ENCODE measurements at regions of chr19 and their contacts with region 1.

Region 1: GRCh38 chr19:46728693-46729676 is 12.1 kb upstream of the PRKD2 start:
- DNase-seq: peak; percentile 88
- ATAC-seq: peak; percentile 90
- H3K4me3 Mint-ChIP-seq: no peak overlapping the region
- H3K27ac Mint-ChIP-seq: peak overlapping the region; percentile 65
- H3K4me1 Mint-ChIP-seq: peaks cover 11% of the 10 kb centered on the region
- H3K27me3 Mint-ChIP-seq: no peaks in the 10 kb centered on the region
- CTCF ChIP-seq: peak; percentile 94

Region 2: DNA sequence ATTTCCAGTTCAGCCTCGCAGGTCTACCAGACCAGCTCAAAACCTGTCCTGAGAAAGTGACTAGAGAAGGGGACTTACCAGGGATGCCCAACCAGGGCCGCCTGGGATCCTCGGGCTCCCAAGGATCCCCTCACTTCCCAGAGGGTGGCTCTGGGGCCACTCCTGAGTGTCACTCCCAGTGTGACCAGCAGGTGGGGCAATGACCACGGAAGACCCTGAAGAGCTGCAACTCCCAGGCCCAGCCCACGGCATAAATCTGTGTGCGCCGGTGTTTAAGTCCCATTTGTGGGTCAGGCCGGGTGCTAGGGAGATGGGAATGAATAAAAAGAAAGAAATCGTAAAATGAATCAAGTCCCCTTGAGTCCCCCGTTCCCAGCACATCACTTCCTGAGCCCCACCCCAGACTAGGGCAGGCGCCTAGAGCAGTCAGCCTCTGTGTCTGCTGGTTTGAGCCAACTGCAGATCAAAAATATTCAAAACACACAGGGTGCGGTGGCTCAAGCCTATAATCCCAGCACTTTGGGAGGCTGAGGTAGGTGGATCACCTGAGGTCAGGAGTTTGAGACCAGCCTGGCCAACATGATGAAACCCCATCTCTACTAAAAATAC is 114.8 kb before region 1 on chr19:
- CTCF ChIA-PET with region 1: interaction called, 8 read pairs
- POLR2A ChIA-PET with region 1: interaction called, 3 read pairs
- intact Hi-C with region 1: loop called (anchors 10 kb)
- DNase-seq: peak; percentile 92
- ATAC-seq: peak; percentile 55
- H3K4me3 Mint-ChIP-seq: peak overlapping the region; percentile 32
- H3K27ac Mint-ChIP-seq: peak overlapping the region; percentile 89
- H3K4me1 Mint-ChIP-seq: peaks cover 72% of the 10 kb centered on the region
- H3K27me3 Mint-ChIP-seq: no peaks in the 10 kb centered on the region
- CTCF ChIP-seq: peak; percentile 96

Region 3: DNA sequence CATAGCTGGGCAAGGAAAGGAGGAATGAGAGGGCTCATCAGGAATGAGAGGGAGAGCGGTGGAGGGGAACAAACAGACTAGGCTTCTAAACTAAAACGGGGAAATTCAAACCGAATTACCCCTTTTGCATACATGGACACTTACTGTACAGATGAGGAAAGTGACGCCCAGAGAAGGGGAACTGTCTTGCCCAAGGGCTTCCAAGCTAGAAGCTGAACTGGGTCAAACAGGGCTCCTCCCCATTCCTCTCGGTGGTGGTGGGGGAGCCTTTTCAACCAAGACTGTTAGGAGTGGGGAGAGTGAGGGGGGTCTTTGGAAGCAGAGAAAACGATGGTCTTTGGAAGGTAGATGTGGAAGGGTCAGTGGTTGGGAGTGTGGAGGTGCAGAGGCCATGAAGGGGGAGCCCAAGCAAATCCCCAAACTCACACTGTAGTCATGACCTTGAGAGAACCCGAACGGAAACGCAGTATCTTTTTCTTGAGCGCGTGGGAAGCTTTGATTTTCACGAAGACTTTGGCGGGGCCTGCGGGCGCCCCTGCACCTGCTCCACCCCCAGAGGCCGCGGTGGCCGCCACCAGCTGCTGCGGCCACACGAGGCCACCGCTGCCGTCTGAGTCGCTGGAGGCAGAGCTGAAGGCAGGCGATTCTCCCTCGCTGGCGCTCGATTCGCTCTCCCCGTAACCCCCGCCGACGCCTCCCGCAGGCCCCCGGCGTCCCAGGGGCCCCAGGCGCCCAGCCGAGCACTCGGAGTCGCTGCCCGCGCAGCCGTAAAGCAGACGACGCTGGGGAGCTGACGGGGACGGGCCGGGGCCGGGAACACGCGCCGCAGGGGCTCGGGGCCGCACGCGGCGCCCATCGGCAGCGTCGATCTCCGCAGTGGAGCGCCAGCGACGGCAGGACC is 80.7 kb before region 1 on chr19:
- CTCF ChIA-PET with region 1: no interaction called
- POLR2A ChIA-PET with region 1: no interaction called
- intact Hi-C with region 1: no loop called
- DNase-seq: peak; percentile 43
- ATAC-seq: peak; percentile 65
- H3K4me3 Mint-ChIP-seq: no peak overlapping the region
- H3K27ac Mint-ChIP-seq: no peak overlapping the region
- H3K4me1 Mint-ChIP-seq: peaks cover 4% of the 10 kb centered on the region
- H3K27me3 Mint-ChIP-seq: peaks cover 37% of the 10 kb centered on the region
- CTCF ChIP-seq: no peak

Region 4: DNA sequence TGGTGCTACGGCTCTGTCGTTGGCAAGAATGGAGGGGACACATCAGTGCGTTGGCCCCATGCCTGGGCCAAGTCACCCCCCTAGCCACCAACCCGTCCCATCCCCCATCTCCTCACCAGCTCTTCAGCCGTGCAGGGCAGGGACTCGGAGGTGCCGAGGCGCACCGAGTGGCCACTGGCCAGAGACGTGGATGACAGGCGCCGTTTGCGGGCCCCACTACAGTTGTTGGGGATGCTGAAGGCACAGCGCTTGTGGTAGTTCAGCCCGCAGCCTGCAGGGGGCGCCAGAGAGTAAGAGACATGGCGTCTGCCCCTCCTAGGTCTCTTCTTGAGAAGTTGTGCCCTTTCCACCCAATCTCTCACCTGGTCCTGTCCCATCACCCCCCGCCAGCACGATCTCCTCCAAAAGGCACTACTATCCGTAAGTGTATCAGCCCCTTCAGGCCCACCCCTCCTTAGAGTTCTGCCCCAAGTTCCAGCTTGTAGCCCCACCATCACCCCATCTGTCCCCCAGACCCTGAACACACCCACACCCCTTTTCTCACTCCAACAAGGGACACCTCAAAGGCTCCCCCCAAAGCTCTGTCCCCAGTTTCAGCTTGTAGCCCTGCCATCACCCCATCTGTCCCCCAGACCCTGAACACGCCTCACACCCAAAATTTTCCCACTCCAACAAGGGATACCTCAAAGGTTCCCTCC is 24.5 kb before region 1 on chr19:
- CTCF ChIA-PET with region 1: interaction called, 95 read pairs
- POLR2A ChIA-PET with region 1: interaction called, 6 read pairs
- intact Hi-C with region 1: loop called (anchors 1 kb)
- DNase-seq: peak; percentile 94
- ATAC-seq: peak; percentile 98
- H3K4me3 Mint-ChIP-seq: no peak overlapping the region
- H3K27ac Mint-ChIP-seq: peak overlapping the region; percentile 57
- H3K4me1 Mint-ChIP-seq: peaks cover 7% of the 10 kb centered on the region
- H3K27me3 Mint-ChIP-seq: no peaks in the 10 kb centered on the region
- CTCF ChIP-seq: peak; percentile 95

Region 5: DNA sequence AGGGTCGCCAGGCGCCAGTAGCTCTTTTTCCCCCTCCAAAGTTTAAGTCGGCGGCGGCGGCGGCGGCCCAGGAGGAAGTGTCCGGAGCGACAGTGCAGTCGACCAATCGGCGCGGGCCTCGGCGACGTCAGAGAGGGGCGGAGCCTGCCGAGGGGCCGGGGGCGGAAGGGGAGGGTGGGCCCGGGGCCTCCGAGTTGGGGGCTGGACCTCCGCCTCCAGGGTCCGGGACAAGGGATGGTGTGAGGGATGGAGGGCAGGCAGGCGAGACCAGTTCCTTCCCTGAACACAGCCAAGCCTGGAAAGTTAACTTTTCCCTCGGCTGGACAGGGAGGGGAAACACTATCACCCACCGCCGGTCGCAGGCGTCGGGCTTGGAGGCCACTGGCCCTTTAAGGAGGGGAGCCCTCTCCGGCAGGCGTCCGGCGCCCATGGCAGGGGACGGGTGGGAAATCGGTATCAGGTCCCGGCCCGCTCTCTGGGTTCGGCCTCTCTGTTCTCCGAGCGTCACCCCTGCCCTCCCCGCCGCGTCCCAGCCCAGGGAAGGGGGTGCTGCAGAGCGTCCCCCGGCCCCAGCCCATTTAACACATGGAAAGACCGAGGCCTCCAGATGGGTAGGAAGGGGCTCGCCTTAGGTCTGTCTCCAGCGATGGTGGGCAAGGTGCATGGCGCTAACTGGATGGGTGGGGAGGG is 11.8 kb before region 1 on chr19 and contains the start of gene PRKD2:
- CTCF ChIA-PET with region 1: interaction called, 43 read pairs
- POLR2A ChIA-PET with region 1: interaction called, 9 read pairs
- intact Hi-C with region 1: no loop called
- DNase-seq: peak; percentile 92
- ATAC-seq: peak; percentile 62
- H3K4me3 Mint-ChIP-seq: peak within 1 kb of the TSS; percentile 86
- H3K27ac Mint-ChIP-seq: peak within 1 kb of the TSS; percentile 94
- H3K4me1 Mint-ChIP-seq: peaks cover 38% of the 10 kb centered on the region
- H3K27me3 Mint-ChIP-seq: no peaks in the 10 kb centered on the region
- CTCF ChIP-seq: no peak
- total RNA-seq, gene PRKD2: 81.1 to 86.0 TPM

Measured in activated CD8-positive, alpha-beta T cell treated with anti-CD3 and anti-CD28 coated beads for 36 hours (primary cell).